Right ventricle myocardium inferior (tissue), 1 donor: ENCODE measurements at regions of chr12 and their contacts with region 1.

Region 1: DNA sequence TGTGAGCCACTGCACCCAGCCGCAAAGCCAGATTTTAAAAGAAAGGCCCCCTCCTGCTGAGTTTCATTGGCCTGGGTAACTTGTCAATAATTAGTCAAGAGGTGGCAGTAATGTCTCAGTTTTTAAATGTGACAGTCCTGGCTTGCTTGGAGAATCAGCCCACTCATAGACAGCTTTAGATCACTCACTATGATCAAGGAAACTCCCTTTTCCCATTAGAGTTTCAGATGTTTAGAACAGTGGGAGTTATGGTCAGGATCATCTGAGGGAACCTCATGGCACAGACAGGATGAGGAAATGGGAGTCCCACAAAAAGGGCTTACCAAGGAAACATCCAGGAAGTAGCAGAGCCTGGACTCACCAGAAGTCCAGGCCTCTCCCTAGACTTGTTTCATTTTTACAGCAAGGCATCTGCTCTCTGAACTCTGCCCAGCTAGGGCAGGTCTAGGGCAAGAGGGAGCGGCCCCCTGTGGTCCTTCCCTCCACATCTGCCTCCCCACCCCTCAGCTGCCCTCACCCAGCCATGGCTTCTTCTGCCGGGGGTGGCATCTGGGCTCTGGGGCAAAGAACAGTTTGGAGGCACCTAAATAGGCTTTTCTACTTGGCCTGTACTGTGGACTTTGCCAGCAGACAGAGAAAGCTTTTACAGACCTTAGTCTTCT is 11.2 kb downstream of the BCL2L14 start:
- DNase-seq: no peak
- ATAC-seq: peak; percentile 81

Region 2: DNA sequence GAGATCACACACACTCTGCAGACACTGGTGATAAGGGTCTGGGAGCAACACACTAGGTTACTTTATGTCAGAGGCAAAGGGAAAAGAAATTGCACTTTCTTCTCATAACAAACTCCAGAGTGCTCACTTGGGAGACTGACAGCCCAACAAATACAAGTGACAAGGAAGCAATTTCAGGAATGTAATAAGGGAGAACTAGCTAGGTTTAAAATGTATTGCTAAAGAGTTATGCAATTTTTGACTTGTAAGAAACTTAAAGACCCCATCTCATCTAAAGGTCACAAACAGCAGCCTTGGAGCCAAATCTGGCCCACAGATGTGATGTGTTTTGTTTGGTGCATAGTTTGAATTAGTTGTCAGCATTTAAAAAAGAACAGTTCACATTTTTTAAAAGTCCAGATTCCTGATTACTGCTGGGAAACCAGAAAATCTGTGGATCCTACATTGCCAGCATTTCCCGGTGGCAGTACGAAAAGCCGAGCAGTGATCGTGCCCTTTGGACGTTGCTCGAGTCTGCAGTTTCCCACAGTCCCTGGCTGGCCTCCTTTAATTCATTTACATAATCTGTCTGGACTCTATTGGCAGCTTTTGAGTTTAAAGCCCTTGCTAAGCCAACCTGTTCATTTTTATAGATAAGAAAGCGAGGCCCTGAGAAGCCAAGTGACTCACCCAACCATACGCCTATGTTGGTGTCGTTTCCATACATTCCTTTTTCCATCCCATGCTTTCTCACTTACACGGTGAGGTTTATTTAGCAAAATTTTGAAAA is 474.5 kb before region 1 on chr12:
- intact Hi-C with region 1: no loop called
- DNase-seq: no peak
- ATAC-seq: no peak

Region 3: GRCh38 chr12:12115514-12115913 is 33.5 kb after region 1 on chr12:
- intact Hi-C with region 1: loop called (anchors 5 kb)
- DNase-seq: no peak
- ATAC-seq: no peak

Region 4: GRCh38 chr12:12266873-12267741 is 185.1 kb after region 1 on chr12 and contains the start of gene LRP6:
- intact Hi-C with region 1: loop called (anchors 10 kb)
- DNase-seq: peak; percentile 94
- ATAC-seq: peak; percentile 98
- total RNA-seq, gene LRP6: 20.1 TPM

Region 5: DNA sequence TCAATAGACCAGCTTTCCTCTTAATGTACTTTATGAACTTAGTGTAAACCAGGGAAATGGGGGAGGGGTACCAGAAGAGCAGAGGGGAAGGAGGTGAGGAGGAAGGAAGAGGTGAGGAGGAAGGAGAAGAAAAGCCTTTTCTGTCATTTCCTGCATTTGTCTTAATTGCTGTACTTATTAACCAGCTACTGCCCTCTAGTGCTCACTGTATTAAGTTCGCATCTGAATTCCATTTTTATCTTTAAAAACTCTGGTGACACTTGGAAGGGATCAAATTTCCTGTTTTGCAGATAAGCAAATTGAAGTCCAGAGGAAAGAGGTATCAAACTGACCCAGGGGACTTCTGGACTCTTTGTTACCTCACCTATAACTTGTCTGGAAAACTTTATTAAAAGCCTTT is 245.8 kb after region 1 on chr12:
- intact Hi-C with region 1: loop called (anchors 2 kb)
- DNase-seq: no peak
- ATAC-seq: no peak

Region 6: DNA sequence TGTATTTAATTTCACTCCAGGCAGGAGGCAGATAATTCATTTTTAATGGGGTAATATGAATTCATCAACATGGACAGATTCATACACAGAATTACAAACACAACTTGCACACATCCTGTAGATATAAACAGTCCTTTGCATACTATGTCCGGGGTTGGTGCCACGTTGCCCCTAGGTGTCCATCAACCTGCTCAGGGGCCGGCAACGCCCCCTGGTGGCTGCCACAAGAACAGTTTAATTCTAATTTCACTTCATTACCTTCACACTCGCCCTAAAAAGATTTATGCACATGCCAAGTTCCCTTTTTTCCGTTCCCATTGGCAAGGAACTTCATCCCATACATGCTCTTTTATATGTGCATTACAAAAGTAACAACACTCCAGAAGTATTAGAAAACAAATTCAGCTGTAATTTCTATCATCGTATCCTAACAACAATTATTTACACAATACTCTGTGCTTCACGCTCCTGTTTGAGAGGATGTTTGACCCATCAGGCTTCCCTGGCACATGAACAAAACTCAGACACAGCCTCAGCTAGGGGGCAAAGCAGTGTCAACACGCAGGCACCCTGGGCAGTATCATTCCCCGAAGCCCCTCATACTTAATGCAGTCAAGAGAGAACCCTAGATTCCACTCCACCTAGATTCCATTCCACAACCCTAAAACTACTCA is 252.5 kb after region 1 on chr12:
- intact Hi-C with region 1: loop called (anchors 2 kb)
- DNase-seq: no peak
- ATAC-seq: peak; percentile 60